ENCODE measurements at regions of chr6 and their contacts with region 1.

Region 1: GRCh38 chr6:109526905-109527628 is 44.0 kb upstream of the ZBTB24 start:
- DNase-seq: peak; percentile 44 to 64 (median 57)
- H3K4me3 ChIP-seq: no peak overlapping the region
- H3K4me3 Mint-ChIP-seq: no peak overlapping the region
- H3K27ac ChIP-seq: no peak overlapping the region
- H3K27ac Mint-ChIP-seq: peak overlapping the region in 4 of 7 donors; percentile 55 to 81 (median 72)
- H3K4me1 ChIP-seq: no peaks in the 10 kb centered on the region
- H3K4me1 Mint-ChIP-seq: peaks cover 3% of the 10 kb centered on the region
- H3K27me3 ChIP-seq: no peaks in the 10 kb centered on the region
- H3K27me3 Mint-ChIP-seq: peaks cover 0 to 2% (median 0%) of the 10 kb centered on the region in 3 donors
- CTCF ChIP-seq: peak; percentile 73

Region 2: GRCh38 chr6:109482905-109483735 is 43.9 kb before region 1 on chr6 and contains the start of gene ZBTB24:
- intact Hi-C with region 1: loop called in 1 of 2 experiments (anchors 5 kb)
- DNase-seq: peak; percentile 89 to 94 (median 90)
- H3K4me3 ChIP-seq: peak within 1 kb of the TSS; percentile 49 to 96 (median 94)
- H3K4me3 Mint-ChIP-seq: peak within 1 kb of the TSS; percentile 79 to 92
- H3K27ac ChIP-seq: peak within 1 kb of the TSS; percentile 12 to 91
- H3K27ac Mint-ChIP-seq: peak within 1 kb of the TSS; percentile 83 to 89 (median 88)
- H3K4me1 ChIP-seq: peaks cover 35 to 47% of the 10 kb centered on the region in 2 donors
- H3K4me1 Mint-ChIP-seq: peaks cover 44% of the 10 kb centered on the region
- H3K27me3 ChIP-seq: no peaks in the 10 kb centered on the region
- H3K27me3 Mint-ChIP-seq: peaks cover 1 to 9% (median 4%) of the 10 kb centered on the region in 3 donors
- CTCF ChIP-seq: no peak
- polyA plus RNA-seq, gene ZBTB24: 3.1 to 4.7 (median 3.4) TPM

Region 3: DNA sequence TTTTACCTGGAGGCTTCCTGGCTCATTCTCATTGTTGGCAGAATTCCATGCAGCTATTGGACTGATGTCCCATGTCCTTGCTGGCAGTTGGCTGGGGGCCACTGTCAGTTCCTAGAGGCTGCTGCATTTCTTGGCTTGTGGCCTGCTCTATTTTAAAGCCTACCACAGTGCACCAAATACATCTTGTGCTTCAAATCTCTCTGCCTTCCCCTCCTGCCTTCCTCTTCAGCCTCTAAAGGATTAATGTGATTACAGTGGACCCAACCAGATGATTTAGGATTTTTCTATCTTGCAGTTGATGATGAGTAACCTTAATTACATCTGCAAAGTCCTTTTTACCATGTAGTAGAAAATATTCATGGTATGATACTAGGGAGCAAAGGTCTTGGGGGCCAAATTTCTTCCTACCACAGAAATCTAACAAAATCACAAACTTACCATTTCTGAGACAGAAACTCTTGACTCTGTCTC is 245.9 kb after region 1 on chr6:
- intact Hi-C with region 1: loop called in 1 of 2 experiments (anchors 10 kb)
- DNase-seq: peak in 2 of 3 donors; percentile 7
- H3K4me3 ChIP-seq: peak overlapping the region in 1 of 3 experiments; percentile 39
- H3K4me3 Mint-ChIP-seq: no peak overlapping the region
- H3K27ac ChIP-seq: peak overlapping the region; percentile 90 to 94
- H3K27ac Mint-ChIP-seq: peak overlapping the region; percentile 95 to 100 (median 99)
- H3K4me1 ChIP-seq: peaks cover 55 to 63% of the 10 kb centered on the region in 2 donors
- H3K4me1 Mint-ChIP-seq: peaks cover 52% of the 10 kb centered on the region
- H3K27me3 ChIP-seq: no peaks in the 10 kb centered on the region
- H3K27me3 Mint-ChIP-seq: peaks cover 0 to 1% (median 0%) of the 10 kb centered on the region in 3 donors
- CTCF ChIP-seq: no peak

Region 4: GRCh38 chr6:110039364-110039980 is 512.4 kb after region 1 on chr6:
- intact Hi-C with region 1: loop called (anchors 5 kb)
- DNase-seq: peak; percentile 83
- H3K4me3 ChIP-seq: peak overlapping the region; percentile 46 to 77 (median 70)
- H3K4me3 Mint-ChIP-seq: peak overlapping the region; percentile 93 to 96
- H3K27ac ChIP-seq: peak overlapping the region; percentile 14 to 52
- H3K27ac Mint-ChIP-seq: peak overlapping the region; percentile 63 to 88 (median 84)
- H3K4me1 ChIP-seq: peaks cover 14 to 21% of the 10 kb centered on the region in 2 donors
- H3K4me1 Mint-ChIP-seq: peaks cover 18% of the 10 kb centered on the region
- H3K27me3 ChIP-seq: no peaks in the 10 kb centered on the region
- H3K27me3 Mint-ChIP-seq: peaks cover 0 to 7% (median 6%) of the 10 kb centered on the region in 3 donors
- CTCF ChIP-seq: peak; percentile 80

Region 5: DNA sequence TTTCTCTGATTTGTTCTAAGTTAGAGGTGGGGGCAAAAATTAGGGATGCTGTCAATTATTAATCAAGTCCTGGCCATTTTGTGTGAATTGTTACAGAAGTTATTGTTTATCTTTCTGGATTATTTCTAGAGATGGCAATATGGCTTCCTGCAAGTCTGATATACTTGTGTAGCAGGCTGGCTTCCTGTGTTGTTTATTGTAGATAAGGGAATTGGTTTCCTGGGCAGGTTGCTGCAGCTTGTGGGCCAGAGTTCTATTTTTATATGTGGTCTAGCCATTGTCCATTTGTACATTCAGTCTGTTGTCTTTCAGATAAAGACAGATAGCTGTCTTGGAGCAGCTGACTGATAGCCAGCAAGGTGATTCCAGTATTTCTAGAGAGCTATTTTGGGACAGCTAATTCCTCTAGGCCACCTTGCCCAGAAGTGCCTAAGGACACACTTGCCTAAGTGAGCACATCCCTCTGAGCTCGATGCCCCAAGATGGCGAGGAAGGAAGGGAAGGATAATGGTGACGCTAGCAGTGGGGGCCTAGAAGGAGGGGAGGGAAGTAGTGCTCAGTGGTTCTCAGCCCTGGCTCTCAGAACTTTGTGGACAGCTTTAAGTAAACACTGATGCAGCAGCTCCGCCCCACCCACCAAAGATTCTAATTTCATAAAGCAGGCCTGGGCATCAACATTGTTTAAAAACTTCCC is 862.8 kb after region 1 on chr6:
- intact Hi-C with region 1: loop called in 1 of 2 experiments (anchors 5 kb)
- DNase-seq: no peak
- H3K4me3 ChIP-seq: no peak overlapping the region
- H3K4me3 Mint-ChIP-seq: no peak overlapping the region
- H3K27ac ChIP-seq: no peak overlapping the region
- H3K27ac Mint-ChIP-seq: no peak overlapping the region
- H3K4me1 ChIP-seq: no peaks in the 10 kb centered on the region
- H3K4me1 Mint-ChIP-seq: peaks cover 2% of the 10 kb centered on the region
- H3K27me3 ChIP-seq: no peaks in the 10 kb centered on the region
- H3K27me3 Mint-ChIP-seq: peaks cover 0 to 2% (median 2%) of the 10 kb centered on the region in 3 donors
- CTCF ChIP-seq: no peak